Right ventricle myocardium inferior (tissue), 1 donor: ENCODE measurements at regions of chr1 and their contacts with region 1.

Region 1: DNA sequence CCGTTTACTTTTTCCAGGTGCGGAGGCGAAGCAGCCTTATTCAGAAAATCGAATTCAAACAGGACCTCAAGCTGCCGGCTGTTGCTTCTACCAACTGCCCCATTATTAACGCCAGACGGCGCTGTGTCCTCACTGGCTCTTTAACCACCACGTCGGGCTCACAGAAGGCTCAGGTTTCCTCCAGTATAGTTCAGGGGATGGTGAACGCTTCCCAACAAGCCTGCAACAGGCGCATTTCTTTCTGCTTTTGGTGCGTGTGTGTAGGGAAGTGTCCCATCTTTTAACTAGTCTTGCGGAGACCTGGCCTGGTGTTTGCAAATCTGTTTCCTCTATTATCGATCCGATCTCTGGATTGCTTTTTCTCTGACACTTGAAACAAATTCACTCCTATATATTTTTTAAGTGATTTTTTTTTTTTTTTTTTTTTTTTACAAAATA is 791 bp upstream of the STUM start:
- DNase-seq: peak; percentile 88
- ATAC-seq: peak; percentile 83

Region 2: GRCh38 chr1:226424228-226425003 is 123.4 kb before region 1 on chr1:
- intact Hi-C with region 1: loop called (anchors 10 kb)
- DNase-seq: no peak
- ATAC-seq: peak; percentile 80

Region 3: GRCh38 chr1:226603022-226603857 is 55.5 kb after region 1 on chr1:
- intact Hi-C with region 1: loop called (anchors 2 kb)
- DNase-seq: no peak
- ATAC-seq: peak; percentile 70

Region 4: GRCh38 chr1:226608699-226609505 is 61.1 kb after region 1 on chr1:
- intact Hi-C with region 1: loop called (anchors 2 kb)
- DNase-seq: peak; percentile 84
- ATAC-seq: peak; percentile 43

Region 5: DNA sequence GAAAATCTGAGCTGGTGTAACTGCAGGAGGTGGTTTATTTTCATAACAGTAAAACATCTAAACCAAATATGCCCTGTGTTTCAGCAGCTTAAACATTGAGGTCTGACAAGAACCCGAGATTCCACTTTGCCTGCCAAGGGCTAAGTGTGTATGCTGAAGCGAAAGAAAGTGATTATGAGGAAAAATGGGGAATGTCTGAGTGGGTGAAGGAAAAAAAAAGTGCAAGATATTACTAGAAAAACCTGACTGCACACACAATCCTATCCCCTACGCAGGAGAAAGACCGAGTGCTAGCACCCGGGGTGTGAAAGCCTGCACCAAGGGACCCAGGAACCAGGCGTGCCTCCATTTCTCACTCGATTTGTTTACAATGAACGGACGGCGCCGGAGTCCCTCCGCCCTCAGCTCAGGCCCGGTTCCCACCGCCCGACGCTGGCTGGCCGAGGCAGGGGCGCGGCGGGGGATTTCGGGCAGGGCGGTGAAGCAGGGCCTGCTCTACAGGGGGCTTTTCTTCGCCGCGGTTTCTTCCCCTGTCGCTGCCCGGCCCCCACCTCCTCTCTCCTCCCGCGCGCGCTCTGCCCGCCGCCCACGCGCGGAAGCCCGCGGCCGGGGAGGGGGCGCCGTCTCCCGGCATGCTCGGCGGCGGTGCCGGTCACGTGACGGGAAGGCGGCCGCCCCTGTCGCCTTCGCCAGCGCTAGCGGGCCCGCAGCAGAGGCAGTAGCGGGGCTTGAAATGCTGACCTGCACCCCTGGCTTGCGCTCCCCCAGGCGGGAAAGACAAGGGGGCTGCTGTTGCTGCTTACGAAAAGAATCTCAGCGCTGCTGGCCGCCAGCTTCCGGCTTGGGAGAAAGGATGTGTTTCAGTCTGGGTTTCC is 155.4 kb after region 1 on chr1:
- intact Hi-C with region 1: no loop called
- DNase-seq: peak; percentile 91
- ATAC-seq: peak; percentile 93